ENCODE measurements at regions of chr15 and their contacts with region 1.

Region 1: DNA sequence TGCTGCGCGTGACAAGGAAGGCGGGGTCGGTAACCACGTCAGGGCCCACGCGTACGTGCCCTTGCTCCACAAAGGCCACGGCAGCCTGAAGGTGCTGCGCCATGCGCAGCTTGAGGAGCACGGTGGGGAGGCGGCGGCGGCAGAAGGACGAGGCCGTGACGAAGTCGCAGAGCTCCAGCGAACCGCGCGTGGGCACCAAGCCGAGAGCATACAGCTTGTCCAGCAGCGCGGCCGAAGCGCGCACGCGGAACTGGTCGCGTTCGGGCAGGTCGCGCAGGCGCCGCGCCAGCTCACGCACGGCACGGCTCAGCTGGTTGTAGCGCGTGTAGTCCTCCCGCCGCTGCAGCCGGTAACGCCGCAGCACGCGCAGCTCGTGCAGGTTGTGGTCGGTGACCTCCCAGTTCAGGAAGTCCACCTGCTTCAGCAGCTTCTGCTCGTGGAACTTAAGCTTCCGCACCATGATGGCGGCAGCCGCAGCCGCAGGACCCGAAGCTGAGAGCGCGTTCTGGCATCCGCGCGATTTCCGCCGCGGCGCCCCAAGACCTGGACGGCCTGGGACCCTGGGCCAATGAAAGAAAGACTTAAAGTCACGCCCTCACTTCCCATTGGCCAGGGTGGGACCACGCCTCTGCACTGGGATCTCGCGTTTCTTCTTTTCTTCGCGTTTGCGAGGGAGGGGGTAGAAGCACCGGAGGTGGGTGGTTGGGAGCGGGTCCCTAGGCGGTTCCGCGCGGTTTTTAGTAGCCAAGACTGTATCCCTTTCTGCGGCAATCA is at the start of gene IMP3:
- DNase-seq: peak; percentile 98
- H3K4me3 Mint-ChIP-seq: peak within 1 kb of the TSS; percentile 88
- H3K27ac Mint-ChIP-seq: peak within 1 kb of the TSS; percentile 97
- H3K4me1 Mint-ChIP-seq: peaks cover 32% of the 10 kb centered on the region
- H3K27me3 Mint-ChIP-seq: peaks cover 4% of the 10 kb centered on the region
- total RNA-seq, gene IMP3: 108 and 112 TPM in 2 replicates

Region 2: GRCh38 chr15:75367913-75368688 is 271.8 kb before region 1 on chr15 and contains the start of gene MAN2C1:
- intact Hi-C with region 1: loop called (anchors 1 kb)
- DNase-seq: peak; percentile 98
- H3K4me3 Mint-ChIP-seq: peak within 1 kb of the TSS; percentile 91
- H3K27ac Mint-ChIP-seq: peak within 1 kb of the TSS; percentile 96
- H3K4me1 Mint-ChIP-seq: peaks cover 24% of the 10 kb centered on the region
- H3K27me3 Mint-ChIP-seq: no peaks in the 10 kb centered on the region
- total RNA-seq, gene MAN2C1: 232 and 255 TPM in 2 replicates

Region 3: GRCh38 chr15:75508840-75509532 is 130.9 kb before region 1 on chr15:
- intact Hi-C with region 1: loop called (anchors 1 kb)
- DNase-seq: peak; percentile 78
- H3K4me3 Mint-ChIP-seq: no peak overlapping the region
- H3K27ac Mint-ChIP-seq: no peak overlapping the region
- H3K4me1 Mint-ChIP-seq: no peaks in the 10 kb centered on the region
- H3K27me3 Mint-ChIP-seq: no peaks in the 10 kb centered on the region

Region 4: DNA sequence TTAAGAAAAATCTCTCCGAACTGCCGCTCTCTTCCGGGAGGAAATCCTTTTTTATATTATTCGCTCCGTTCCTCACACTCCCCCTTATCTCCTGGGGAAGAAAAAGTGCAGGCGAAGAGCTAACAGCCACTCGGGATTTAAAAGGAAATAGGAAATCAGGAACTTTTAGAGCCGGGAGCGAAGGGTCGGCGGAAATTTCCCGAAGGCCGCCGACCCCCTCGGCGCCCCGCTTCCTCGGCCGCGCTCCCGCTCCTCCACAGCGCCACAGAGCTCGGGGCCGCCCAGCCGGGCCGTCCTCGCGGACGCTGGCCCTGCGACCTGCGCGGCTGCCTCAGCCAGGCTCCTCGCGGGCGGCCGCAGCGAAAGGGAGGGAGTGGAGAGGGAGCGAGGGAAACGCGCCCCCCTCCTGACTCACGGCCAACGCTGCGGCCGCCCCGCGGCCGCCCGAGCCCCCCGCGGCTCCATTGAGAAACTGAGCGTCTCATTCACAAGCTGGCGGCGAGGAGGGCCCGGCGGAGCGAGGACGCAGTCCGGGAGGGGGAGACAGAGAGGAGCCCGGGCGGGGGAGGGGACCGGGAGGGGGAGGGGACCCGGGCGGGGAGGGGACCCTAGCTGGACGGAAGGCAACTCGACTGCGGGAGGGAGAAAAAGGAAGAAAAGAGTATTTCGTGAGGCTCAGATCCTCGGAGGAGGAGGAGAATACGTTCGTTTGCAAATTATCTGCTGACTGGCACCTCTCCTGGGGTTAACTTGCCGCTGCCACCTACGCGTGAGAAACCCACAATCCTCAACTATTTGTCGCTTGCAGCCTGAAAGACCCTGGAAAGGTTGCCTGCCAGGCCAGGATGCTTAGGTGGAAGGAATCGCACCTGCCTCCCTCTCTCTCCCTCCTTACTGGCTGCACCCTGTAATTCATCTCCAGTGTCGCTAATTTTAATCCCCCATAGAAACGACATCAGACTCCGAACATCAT is 60.7 kb before region 1 on chr15 and contains the start of gene PTPN9:
- intact Hi-C with region 1: loop called (anchors 1 kb)
- DNase-seq: peak; percentile 90
- H3K4me3 Mint-ChIP-seq: peak within 1 kb of the TSS; percentile 88
- H3K27ac Mint-ChIP-seq: peak within 1 kb of the TSS; percentile 92
- H3K4me1 Mint-ChIP-seq: peaks cover 12% of the 10 kb centered on the region
- H3K27me3 Mint-ChIP-seq: no peaks in the 10 kb centered on the region
- total RNA-seq, gene PTPN9: 21.0 and 23.6 TPM in 2 replicates

Region 5: GRCh38 chr15:75597667-75598341 is 42.1 kb before region 1 on chr15:
- intact Hi-C with region 1: loop called (anchors 2 kb)
- DNase-seq: peak; percentile 88
- H3K4me3 Mint-ChIP-seq: peak overlapping the region; percentile 74
- H3K27ac Mint-ChIP-seq: peak overlapping the region; percentile 85
- H3K4me1 Mint-ChIP-seq: peaks cover 36% of the 10 kb centered on the region
- H3K27me3 Mint-ChIP-seq: no peaks in the 10 kb centered on the region

Region 6: DNA sequence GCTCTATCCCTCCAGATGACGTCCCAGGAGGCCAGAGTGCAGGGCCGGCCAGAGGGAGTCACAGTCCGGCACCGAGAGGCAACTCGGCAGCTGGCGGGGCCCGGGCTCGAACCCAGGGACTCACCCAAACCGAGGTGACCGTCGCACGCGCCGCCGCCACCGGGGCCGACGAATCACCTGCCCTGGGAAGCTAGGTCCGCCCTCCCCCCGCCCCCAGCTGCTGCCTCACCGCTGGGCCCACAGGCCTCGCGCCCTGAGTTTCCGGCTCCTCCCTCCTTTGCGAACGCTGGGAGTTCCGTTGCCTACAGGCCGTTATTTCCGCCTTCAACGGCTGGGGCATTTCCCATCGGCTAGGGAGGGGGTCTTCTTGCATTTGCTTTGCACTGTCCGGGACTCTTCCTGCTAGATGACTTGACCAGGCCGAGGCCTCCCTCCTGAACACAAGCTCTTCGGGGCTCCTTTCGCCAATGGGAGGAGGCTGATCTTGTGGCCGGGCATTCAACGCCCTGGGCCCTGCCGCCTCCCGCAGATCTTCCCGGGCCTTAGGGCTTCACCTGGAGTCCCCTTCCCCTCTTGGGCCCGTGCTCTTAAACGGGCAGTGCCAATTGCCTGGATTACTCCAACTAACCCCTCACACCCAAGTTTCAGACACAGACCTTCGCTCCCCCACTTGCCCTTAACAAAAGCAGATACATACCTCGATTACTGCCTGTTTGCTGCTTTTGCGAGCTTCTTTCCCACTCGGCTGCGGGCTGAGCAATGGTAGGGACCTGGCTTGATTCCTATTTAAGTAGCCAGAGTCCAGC is 14.2 kb before region 1 on chr15 and contains the start of gene SNUPN:
- intact Hi-C with region 1: loop called (anchors 1 kb)
- DNase-seq: peak; percentile 97
- H3K4me3 Mint-ChIP-seq: peak within 1 kb of the TSS; percentile 93
- H3K27ac Mint-ChIP-seq: peak within 1 kb of the TSS; percentile 94
- H3K4me1 Mint-ChIP-seq: peaks cover 34% of the 10 kb centered on the region
- H3K27me3 Mint-ChIP-seq: no peaks in the 10 kb centered on the region
- total RNA-seq, gene SNUPN: 33.7 and 34.5 TPM in 2 replicates